ENCODE measurements at regions of chr9 and their contacts with region 1.

Region 1: DNA sequence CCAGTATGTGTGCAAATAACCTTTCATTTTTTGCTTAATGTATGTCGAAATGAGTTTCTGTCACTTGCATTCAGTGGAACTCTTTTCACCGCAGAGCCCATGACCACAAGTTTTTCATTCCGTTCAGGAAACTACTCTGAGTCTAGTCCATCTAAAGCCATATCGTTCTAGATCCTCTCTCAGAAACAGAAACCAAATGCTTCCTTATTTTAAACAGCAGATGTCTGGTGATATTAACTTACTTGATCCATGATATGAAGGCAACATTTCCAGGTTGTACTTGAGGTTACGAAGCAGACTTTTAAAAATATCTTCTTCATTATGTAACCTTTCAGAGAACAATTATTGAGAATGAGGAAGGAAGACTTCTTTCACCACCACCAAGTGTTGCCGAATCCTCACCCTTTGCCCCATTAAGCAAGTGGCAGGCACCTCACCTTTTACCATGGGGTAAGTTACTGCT is 72.4 kb upstream of the GNAQ start:
- DNase-seq: no peak
- CTCF ChIP-seq: no peak

Region 2: GRCh38 chr9:78167356-78167755 is 63.4 kb after region 1 on chr9:
- in situ Hi-C with region 1: no loop called
- DNase-seq: no peak
- CTCF ChIP-seq: no peak

Region 3: GRCh38 chr9:78213712-78214111 is 109.7 kb after region 1 on chr9:
- in situ Hi-C with region 1: loop called (anchors 10 kb)
- DNase-seq: peak; percentile 29
- CTCF ChIP-seq: peak; percentile 31

Region 4: DNA sequence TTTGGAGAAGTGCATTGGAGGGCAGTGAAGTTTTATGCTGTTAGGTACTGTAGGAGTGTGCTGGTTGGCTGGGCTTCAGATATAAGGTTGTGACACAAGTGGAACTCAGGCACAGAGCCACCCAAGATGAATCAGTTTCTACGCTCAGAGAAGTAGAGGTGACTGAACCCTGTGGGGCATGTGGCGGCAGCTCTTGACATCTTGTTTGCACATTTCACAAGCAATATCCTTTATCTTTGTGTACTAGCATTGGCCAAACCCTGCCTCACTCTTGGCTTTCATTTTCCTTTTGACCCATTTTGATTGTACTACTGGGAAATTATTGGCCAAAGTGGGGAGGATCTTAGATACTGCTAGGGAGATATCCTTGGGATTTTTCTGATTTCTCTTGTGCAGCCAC is 302.9 kb after region 1 on chr9:
- in situ Hi-C with region 1: no loop called
- DNase-seq: no peak
- CTCF ChIP-seq: no peak

Region 5: GRCh38 chr9:79053598-79053997 is 949.6 kb after region 1 on chr9:
- in situ Hi-C with region 1: no loop called
- DNase-seq: no peak
- CTCF ChIP-seq: no peak